BJ (cell line): ENCODE measurements at regions of chr4 and their contacts with region 1.

Region 1: DNA sequence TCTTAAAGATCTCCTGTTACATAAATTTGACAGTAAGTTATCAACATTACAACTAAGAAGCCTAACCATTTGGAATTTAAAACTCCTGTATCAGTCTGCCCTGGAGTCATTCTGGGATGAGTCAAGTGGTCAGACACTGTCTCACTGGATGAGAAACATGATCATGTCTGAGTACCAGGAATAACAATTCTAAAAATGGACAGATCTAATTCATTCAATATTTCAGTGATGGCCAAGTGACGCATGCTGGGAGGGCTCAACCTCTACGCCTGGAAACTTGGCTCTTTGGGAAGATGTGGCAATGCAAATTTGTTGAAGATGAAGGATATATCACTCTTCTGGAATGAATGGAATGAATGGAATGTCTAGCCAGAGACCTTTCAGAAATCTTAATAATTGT is 1427.2 kb downstream of the STIM2 start:
- DNase-seq: peak; percentile 100
- H3K4me3 ChIP-seq: no peak overlapping the region
- H3K27me3 ChIP-seq: no peaks in the 10 kb centered on the region
- CTCF ChIP-seq: no peak

Region 2: GRCh38 chr4:28256295-28256694 is 31.5 kb before region 1 on chr4:
- CTCF ChIA-PET with region 1: no interaction called
- POLR2A ChIA-PET with region 1: interaction called, 11 read pairs
- DNase-seq: no peak
- H3K4me3 ChIP-seq: no peak overlapping the region
- H3K27me3 ChIP-seq: no peaks in the 10 kb centered on the region
- CTCF ChIP-seq: no peak

Region 3: DNA sequence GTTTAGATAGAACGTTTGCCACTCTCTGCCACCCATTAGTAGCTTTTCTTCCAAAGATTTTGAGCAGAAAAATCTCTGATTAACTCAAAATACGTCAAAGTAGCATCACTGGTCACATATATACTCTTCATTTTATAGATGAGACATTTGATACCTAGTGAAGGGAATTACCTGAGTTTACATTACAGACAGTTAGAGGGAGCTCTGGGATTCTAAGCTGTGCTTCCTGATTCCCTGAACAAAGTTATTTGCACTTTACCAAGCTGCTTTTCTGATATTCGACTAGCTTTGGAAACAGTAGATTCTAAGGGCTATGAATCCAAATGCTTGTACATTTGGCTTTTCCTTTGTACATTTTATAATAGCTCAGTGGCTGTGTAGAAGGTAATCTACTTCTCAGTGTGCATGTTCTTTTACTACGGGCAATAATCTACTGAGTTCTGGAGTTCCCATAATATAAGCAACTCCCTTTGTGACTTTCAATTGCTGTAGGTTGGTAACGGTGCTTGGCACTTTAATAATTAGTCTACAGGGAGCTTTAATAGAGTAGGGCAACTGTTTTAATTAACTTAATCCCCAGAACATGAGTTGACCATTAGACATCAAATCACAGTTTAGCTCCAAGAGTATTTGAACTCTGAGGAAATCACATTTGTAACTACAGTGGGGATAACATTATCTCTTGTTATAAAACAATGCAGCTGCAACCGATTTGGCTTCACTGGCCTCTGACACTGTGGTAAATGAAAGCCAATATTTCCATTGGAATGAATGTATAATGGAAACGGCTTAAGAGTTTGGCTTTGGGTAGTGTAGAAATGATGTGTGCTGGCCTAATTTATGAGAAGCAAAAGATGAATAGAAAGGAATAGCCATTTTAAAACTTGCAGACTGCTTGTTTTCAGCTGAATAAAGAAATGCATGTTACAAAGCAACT is 175.2 kb after region 1 on chr4:
- CTCF ChIA-PET with region 1: no interaction called
- POLR2A ChIA-PET with region 1: interaction called, 10 read pairs
- DNase-seq: no peak
- H3K4me3 ChIP-seq: no peak overlapping the region
- H3K27me3 ChIP-seq: no peaks in the 10 kb centered on the region
- CTCF ChIP-seq: no peak